Activated CD4-positive, alpha-beta memory T cell treated with anti-CD3 and anti-CD28 coated beads, Interleukin-2, amount 10 ng/mL, durations not matched to agents 7 days and 5 days (primary cell): ENCODE measurements at regions of chr18 and their contacts with region 1.

Region 1: DNA sequence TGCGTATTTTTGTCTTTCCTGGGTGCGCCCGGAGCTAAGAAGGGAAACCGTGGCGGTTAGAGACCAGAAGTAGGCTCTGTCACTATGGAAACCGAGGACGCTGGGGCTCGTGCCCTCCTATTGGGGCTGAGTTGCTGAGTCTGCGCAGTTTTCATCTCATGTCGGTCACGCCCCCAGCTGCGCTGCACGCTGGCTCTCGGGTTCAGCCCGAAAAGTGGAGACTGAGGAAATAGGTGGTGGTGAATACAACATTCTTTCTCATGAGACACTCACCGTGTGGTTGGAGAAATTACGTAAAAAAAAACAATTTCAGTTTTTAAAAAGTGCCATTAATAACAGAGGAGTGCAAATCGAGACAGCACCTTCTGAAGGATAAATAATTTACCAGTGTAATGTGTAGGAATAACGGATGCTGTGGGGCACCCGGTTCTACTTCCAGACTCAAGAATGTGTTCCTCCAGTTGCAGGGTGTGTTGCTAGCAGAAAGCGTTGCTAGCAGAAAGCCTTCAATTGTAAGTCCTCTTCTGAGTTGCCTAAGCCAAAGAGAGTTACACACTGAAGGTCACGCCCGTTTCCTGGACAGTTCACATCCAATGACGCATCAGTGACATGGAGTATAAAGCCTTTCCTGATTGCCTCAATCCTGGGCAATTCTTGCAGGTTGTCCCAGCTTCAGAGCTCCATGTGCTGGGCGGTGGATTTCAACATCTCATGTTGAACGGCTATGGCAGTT is 20.4 kb upstream of the CXXC1 start:
- DNase-seq: peak; percentile 94
- H3K4me3 Mint-ChIP-seq: peak overlapping the region; percentile 86
- H3K27ac Mint-ChIP-seq: peak overlapping the region; percentile 85
- H3K4me1 Mint-ChIP-seq: peaks cover 25% of the 10 kb centered on the region
- H3K27me3 Mint-ChIP-seq: peaks cover 40% of the 10 kb centered on the region

Region 2: GRCh38 chr18:50334546-50335152 is 26.7 kb after region 1 on chr18:
- CTCF ChIA-PET with region 1: no interaction called
- POLR2A ChIA-PET with region 1: no interaction called
- DNase-seq: no peak
- H3K4me3 Mint-ChIP-seq: no peak overlapping the region
- H3K27ac Mint-ChIP-seq: no peak overlapping the region
- H3K4me1 Mint-ChIP-seq: no peaks in the 10 kb centered on the region
- H3K27me3 Mint-ChIP-seq: peaks cover 14% of the 10 kb centered on the region

Region 3: GRCh38 chr18:50374753-50375391 is 67.0 kb after region 1 on chr18 and contains the start of gene SKA1:
- CTCF ChIA-PET with region 1: interaction called, 3 read pairs
- POLR2A ChIA-PET with region 1: interaction called, 15 read pairs
- DNase-seq: peak; percentile 94
- H3K4me3 Mint-ChIP-seq: peak within 1 kb of the TSS; percentile 89
- H3K27ac Mint-ChIP-seq: peak within 1 kb of the TSS; percentile 85
- H3K4me1 Mint-ChIP-seq: peaks cover 34% of the 10 kb centered on the region
- H3K27me3 Mint-ChIP-seq: peaks cover 14% of the 10 kb centered on the region
- total RNA-seq, gene SKA1: 44.6 to 45.6 TPM